Sigmoid colon (tissue), 7 donors: ENCODE measurements at regions of chr1 and their contacts with region 1.

Region 1: GRCh38 chr1:205211169-205211838 is at the start of gene DSTYK:
- DNase-seq: peak; percentile 98
- H3K4me3 ChIP-seq: peak within 1 kb of the TSS; percentile 91 to 94 (median 93)
- H3K27ac ChIP-seq: peak within 1 kb of the TSS; percentile 90 to 96 (median 93)
- H3K4me1 ChIP-seq: peaks cover 0 to 24% (median 17%) of the 10 kb centered on the region in 4 donors
- H3K27me3 ChIP-seq: no peaks in the 10 kb centered on the region
- CTCF ChIP-seq: no peak
- EP300 ChIP-seq: no peak
- POLR2A ChIP-seq: peak; percentile 59 to 64
- total RNA-seq, gene DSTYK: 9.1 to 13.3 (median 12.7) TPM

Region 2: DNA sequence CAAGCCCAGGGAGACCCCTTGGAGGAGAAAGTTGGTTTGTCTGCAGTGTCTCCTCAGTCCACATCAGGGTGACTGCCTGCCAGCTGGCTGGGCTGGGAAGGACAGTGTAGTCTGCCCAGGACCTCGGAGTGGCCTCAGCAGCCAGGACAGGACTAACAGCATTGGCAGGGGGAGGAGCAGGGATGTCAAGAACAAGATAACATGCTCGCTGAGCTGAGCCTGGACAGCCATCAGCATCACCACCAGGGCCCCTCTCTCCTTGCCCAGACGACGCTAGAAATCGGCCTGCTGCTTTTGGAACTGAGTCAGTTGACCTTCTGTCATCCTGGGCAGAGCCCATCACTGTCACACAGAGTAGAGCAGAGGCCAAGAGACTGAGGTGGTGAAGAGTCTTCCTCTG is 251.9 kb before region 1 on chr1:
- intact Hi-C with region 1: no loop called
- DNase-seq: no peak
- H3K4me3 ChIP-seq: no peak overlapping the region
- H3K27ac ChIP-seq: peak overlapping the region in 1 of 4 donors; percentile 16
- H3K4me1 ChIP-seq: no peaks in the 10 kb centered on the region
- H3K27me3 ChIP-seq: no peaks in the 10 kb centered on the region
- CTCF ChIP-seq: no peak
- EP300 ChIP-seq: no peak
- POLR2A ChIP-seq: no peak

Region 3: GRCh38 chr1:205066141-205066818 is 145.0 kb before region 1 on chr1:
- intact Hi-C with region 1: no loop called
- DNase-seq: peak; percentile 57
- H3K4me3 ChIP-seq: no peak overlapping the region
- H3K27ac ChIP-seq: no peak overlapping the region
- H3K4me1 ChIP-seq: peaks cover 0 to 16% (median 9%) of the 10 kb centered on the region in 4 donors
- H3K27me3 ChIP-seq: no peaks in the 10 kb centered on the region
- CTCF ChIP-seq: no peak
- EP300 ChIP-seq: no peak
- POLR2A ChIP-seq: no peak

Region 4: GRCh38 chr1:205121660-205122488 is 89.4 kb before region 1 on chr1 and contains the start of gene RBBP5:
- intact Hi-C with region 1: no loop called
- DNase-seq: peak; percentile 97
- H3K4me3 ChIP-seq: peak within 1 kb of the TSS; percentile 80 to 95 (median 90)
- H3K27ac ChIP-seq: peak within 1 kb of the TSS; percentile 88 to 93 (median 91)
- H3K4me1 ChIP-seq: peaks cover 0 to 31% (median 23%) of the 10 kb centered on the region in 4 donors
- H3K27me3 ChIP-seq: no peaks in the 10 kb centered on the region
- CTCF ChIP-seq: peak; percentile 49 to 68 (median 56)
- EP300 ChIP-seq: no peak
- POLR2A ChIP-seq: peak; percentile 69 to 73
- total RNA-seq, gene RBBP5: 12.2 to 36.5 (median 13.9) TPM

Region 5: GRCh38 chr1:205227584-205228006 is 16.3 kb after region 1 on chr1 and contains the start of gene TMCC2:
- intact Hi-C with region 1: loop called (anchors 2 kb)
- DNase-seq: peak; percentile 96
- H3K4me3 ChIP-seq: peak within 1 kb of the TSS; percentile 52 to 71 (median 63)
- H3K27ac ChIP-seq: peak within 1 kb of the TSS; percentile 40 to 68 (median 64)
- H3K4me1 ChIP-seq: peaks cover 0 to 31% (median 28%) of the 10 kb centered on the region in 4 donors
- H3K27me3 ChIP-seq: no peaks in the 10 kb centered on the region
- CTCF ChIP-seq: no peak
- EP300 ChIP-seq: no peak
- POLR2A ChIP-seq: no peak
- total RNA-seq, gene TMCC2: 4.3 to 6.4 (median 5.6) TPM

Region 6: GRCh38 chr1:205248793-205249601 is 37.7 kb after region 1 on chr1:
- intact Hi-C with region 1: loop called (anchors 5 kb)
- DNase-seq: peak; percentile 92
- H3K4me3 ChIP-seq: no peak overlapping the region
- H3K27ac ChIP-seq: peak overlapping the region; percentile 50 to 75 (median 61)
- H3K4me1 ChIP-seq: peaks cover 0 to 66% (median 51%) of the 10 kb centered on the region in 4 donors
- H3K27me3 ChIP-seq: no peaks in the 10 kb centered on the region
- CTCF ChIP-seq: no peak
- EP300 ChIP-seq: no peak
- POLR2A ChIP-seq: no peak

Region 7: DNA sequence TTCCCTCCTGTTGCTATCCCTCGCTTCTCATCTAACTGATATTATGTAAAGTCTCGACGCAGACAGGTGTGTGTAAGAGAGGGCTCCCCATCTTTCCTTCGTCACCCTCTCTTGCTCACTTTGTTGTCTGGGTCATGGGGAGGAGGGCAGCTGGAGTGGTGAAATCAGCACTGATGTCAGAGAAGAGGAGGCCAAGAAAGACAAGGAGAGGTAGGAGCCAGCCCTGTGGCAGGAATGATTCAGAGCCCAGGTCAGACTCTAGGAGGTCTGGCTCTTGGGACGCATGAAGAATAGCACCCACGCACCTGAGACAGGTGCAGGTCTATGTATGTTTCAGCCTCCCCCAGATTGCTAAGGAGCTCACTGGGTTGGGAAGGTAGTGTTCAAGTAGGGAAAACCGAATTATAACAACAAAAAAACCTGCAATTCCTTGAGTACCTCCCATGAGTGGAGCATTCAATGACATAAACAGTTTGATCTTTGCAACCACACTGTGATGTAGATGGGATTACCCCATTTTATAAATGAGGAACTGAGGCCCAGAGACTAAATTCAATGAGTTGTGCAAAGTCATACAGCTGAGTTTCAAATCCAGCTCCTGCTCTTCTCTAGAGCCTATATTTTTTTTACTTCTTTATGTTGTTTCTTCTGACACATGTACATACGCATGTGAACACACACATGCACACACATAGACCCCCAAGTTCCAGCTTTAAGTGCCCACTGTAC is 99.8 kb after region 1 on chr1:
- intact Hi-C with region 1: no loop called
- DNase-seq: no peak
- H3K4me3 ChIP-seq: no peak overlapping the region
- H3K27ac ChIP-seq: no peak overlapping the region
- H3K4me1 ChIP-seq: peaks cover 0 to 14% (median 7%) of the 10 kb centered on the region in 4 donors
- H3K27me3 ChIP-seq: no peaks in the 10 kb centered on the region
- CTCF ChIP-seq: no peak
- EP300 ChIP-seq: no peak
- POLR2A ChIP-seq: no peak